Heart right ventricle (tissue), 16 donors: ENCODE measurements at regions of chr10 and their contacts with region 1.

Region 1: GRCh38 chr10:29784175-29784773 is 149.5 kb upstream of the SVIL start:
- DNase-seq: peak; percentile 14 to 73
- ATAC-seq: peak; percentile 84 to 99 (median 97)
- H3K4me3 ChIP-seq: no peak overlapping the region
- H3K27ac ChIP-seq: peak overlapping the region in 9 of 10 donors; percentile 34 to 78 (median 58)
- H3K4me1 ChIP-seq: peaks cover 0 to 22% (median 19%) of the 10 kb centered on the region in 9 donors
- H3K27me3 ChIP-seq: no peaks in the 10 kb centered on the region
- CTCF ChIP-seq: no peak

Region 2: GRCh38 chr10:29688230-29688661 is 96.0 kb before region 1 on chr10:
- intact Hi-C with region 1: no loop called
- DNase-seq: no peak
- ATAC-seq: no peak
- H3K4me3 ChIP-seq: no peak overlapping the region
- H3K27ac ChIP-seq: peak overlapping the region in 3 of 10 donors; percentile 7 to 58 (median 19)
- H3K4me1 ChIP-seq: peaks cover 5 to 44% (median 26%) of the 10 kb centered on the region in 9 donors
- H3K27me3 ChIP-seq: no peaks in the 10 kb centered on the region
- CTCF ChIP-seq: no peak

Region 3: DNA sequence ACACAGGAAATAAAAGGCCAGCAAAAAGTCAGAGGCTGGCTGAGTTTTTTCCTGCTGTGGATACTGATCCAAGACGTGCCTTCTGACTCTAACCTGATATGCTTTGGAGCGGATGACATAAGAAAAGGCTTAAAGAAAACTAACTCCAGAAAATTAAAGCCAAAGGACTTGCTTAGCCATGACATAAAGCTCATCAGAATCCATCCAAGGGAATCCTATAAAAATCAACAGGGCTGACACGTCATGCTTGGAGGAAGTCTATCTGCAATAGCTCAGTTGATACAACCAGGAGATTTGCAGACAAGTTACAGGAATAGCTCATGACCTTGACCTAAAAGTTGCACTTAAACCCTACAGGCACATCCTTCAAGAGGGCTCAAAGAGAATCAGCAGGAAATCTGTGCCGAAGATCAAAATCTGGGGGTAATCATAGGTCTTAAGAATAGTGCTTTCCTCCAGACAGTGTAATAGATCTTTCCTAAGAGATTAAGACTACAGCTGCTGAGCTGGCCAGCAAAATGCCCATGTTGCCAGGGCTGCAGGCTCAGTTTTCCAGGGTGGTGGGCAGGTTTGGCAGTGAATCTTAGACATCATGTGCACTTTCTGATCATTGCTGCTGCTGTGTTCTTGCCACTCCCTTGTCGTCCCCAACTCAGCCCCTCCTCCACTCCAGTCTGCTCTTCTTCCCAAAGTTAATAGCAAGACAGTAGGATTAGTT is 38.0 kb before region 1 on chr10:
- intact Hi-C with region 1: loop called in 1 of 10 experiments (anchors 5 kb)
- DNase-seq: no peak
- ATAC-seq: peak in 5 of 8 donors; percentile 24 to 52 (median 41)
- H3K4me3 ChIP-seq: no peak overlapping the region
- H3K27ac ChIP-seq: peak overlapping the region in 1 of 10 donors; percentile 20
- H3K4me1 ChIP-seq: peaks cover 0 to 17% (median 7%) of the 10 kb centered on the region in 9 donors
- H3K27me3 ChIP-seq: no peaks in the 10 kb centered on the region
- CTCF ChIP-seq: no peak